ENCODE measurements at regions of chr5 and their contacts with region 1.

Region 1: DNA sequence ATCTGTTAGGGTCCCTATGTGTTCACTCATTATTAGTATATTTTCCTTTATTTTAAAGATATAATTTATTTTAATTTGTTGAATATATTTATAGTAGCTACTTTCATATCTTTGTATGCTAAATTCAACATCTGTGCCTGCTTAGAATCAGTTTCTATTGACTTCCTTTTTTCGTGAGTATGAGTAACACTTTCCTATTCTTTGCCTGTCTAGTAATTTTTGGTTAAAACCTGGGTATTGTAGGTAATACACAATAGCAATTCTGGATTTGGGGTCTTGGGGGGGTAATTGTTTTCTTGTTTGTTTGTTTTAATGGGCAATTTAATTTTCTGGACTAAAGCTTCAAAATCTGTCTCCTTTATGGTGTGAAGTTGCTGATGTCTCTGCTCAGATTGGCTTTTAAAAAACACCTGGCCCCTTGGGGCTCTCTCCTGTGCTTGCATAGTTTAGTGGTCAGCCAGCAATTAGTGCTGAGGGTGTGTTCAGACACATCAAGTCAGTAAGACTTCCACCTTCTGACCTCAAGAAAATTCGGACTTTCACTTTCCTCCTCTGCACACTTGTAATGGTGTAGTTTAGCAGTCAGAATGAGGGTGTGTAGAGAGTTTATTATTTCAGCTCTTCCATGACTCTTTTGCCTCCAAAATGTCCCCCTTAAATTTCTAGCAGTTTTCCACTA is 124.4 kb upstream of the MAP1B start:
- DNase-seq: no peak
- ATAC-seq: no peak
- H3K4me3 ChIP-seq: no peak overlapping the region
- H3K27ac ChIP-seq: no peak overlapping the region
- H3K4me1 ChIP-seq: no peaks in the 10 kb centered on the region
- H3K27me3 ChIP-seq: peaks cover 3% of the 10 kb centered on the region
- CTCF ChIP-seq: no peak
- POLR2A ChIP-seq: no peak
- RAD21 ChIP-seq: no peak

Region 2: DNA sequence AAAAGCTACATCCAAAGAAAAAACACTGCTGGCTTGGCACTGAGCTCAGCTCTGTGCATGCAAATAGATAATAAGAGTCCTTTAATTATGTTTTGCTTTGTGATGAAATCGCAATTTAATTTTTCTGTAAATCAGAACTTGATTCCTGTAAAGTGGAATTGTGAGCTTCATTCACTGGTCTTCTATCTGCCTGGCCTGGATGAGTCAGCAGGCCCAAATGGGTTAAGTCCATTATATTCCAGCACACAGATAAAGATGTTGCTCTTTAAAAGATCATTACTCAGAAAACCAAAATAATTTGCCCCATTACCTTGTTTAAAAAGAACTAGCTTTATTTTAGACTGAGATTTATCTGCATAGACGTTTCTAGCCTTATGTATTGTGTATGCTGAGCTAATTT is 173.4 kb before region 1 on chr5:
- CTCF ChIA-PET with region 1: no interaction called
- POLR2A ChIA-PET with region 1: no interaction called
- dilution Hi-C with region 1: no loop called
- in situ Hi-C with region 1: loop called (anchors 10 kb)
- intact Hi-C with region 1: no loop called
- DNase-seq: no peak
- ATAC-seq: no peak
- H3K4me3 ChIP-seq: no peak overlapping the region
- H3K27ac ChIP-seq: no peak overlapping the region
- H3K4me1 ChIP-seq: no peaks in the 10 kb centered on the region
- H3K27me3 ChIP-seq: peaks cover 17% of the 10 kb centered on the region
- CTCF ChIP-seq: no peak
- POLR2A ChIP-seq: no peak
- RAD21 ChIP-seq: no peak

Region 3: DNA sequence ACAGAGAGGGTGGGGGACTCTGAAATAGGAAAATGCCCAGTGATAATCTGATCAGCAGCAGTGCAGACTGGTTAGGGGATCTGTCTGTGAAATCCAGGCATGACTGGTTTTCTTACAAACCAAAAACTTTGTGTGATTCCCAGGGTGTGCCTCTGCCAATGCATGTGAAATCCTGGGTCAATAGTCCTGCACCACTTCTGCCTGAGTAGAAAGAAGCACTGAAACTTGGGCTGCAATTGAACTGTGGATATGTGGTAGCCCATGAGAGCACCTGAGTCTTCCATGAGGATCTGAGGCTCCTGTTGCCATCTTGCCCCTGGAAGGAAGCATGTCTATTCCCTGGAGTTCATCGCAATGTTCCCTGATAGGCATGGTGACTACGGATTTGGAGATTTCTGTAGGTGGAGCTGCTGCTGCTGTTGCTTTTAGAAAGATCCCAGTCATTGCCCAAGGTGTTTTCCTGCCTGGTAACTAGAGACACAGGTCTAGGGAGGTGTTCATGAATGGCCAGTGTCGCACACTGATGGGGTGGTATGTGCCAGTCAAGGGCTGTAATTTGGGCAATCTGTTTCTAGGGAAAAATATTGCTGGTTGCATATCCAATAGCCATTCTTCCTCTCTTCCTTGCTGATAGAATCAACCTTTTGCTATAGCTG is 117.1 kb before region 1 on chr5:
- CTCF ChIA-PET with region 1: no interaction called
- POLR2A ChIA-PET with region 1: interaction called, 13 read pairs
- dilution Hi-C with region 1: no loop called
- in situ Hi-C with region 1: no loop called
- intact Hi-C with region 1: no loop called
- DNase-seq: no peak
- ATAC-seq: no peak
- H3K4me3 ChIP-seq: no peak overlapping the region
- H3K27ac ChIP-seq: no peak overlapping the region
- H3K4me1 ChIP-seq: peaks cover 4% of the 10 kb centered on the region; the same call in 1 of the 2 replicates
- H3K27me3 ChIP-seq: peaks cover 18% of the 10 kb centered on the region
- CTCF ChIP-seq: no peak
- POLR2A ChIP-seq: no peak
- RAD21 ChIP-seq: no peak

Measured in IMR-90 (cell line).